ENCODE measurements at regions of chr7 and their contacts with region 1.

Region 1: GRCh38 chr7:131107337-131108211 is 220.1 kb upstream of the MKLN1 start:
- DNase-seq: peak; percentile 68 to 85
- ATAC-seq: peak; percentile 46 to 64 (median 52)
- H3K4me3 ChIP-seq: peak overlapping the region; percentile 98
- H3K27ac ChIP-seq: peak overlapping the region; percentile 96
- H3K4me1 ChIP-seq: peaks cover 45% of the 10 kb centered on the region
- H3K27me3 ChIP-seq: no peaks in the 10 kb centered on the region
- CTCF ChIP-seq: no peak

Region 2: GRCh38 chr7:130896898-130897514 is 210.6 kb before region 1 on chr7:
- intact Hi-C with region 1: loop called in 1 of 2 experiments (anchors 5 kb)
- DNase-seq: peak; percentile 81 to 89
- ATAC-seq: peak; percentile 31 to 58 (median 44)
- H3K4me3 ChIP-seq: peak overlapping the region; percentile 0
- H3K27ac ChIP-seq: peak overlapping the region; percentile 94
- H3K4me1 ChIP-seq: peaks cover 89% of the 10 kb centered on the region
- H3K27me3 ChIP-seq: no peaks in the 10 kb centered on the region
- CTCF ChIP-seq: peak; percentile 77

Region 3: GRCh38 chr7:131145026-131145425 is 37.5 kb after region 1 on chr7:
- intact Hi-C with region 1: loop called (anchors 5 kb)
- DNase-seq: no peak
- ATAC-seq: no peak
- H3K4me3 ChIP-seq: no peak overlapping the region
- H3K27ac ChIP-seq: no peak overlapping the region
- H3K4me1 ChIP-seq: peaks cover 22% of the 10 kb centered on the region
- H3K27me3 ChIP-seq: no peaks in the 10 kb centered on the region
- CTCF ChIP-seq: no peak

Region 4: GRCh38 chr7:131188367-131189339 is 81.1 kb after region 1 on chr7:
- intact Hi-C with region 1: loop called (anchors 1 to 5 kb)
- DNase-seq: peak in 1 of 2 donors; percentile 56
- ATAC-seq: peak; percentile 12 to 79 (median 50)
- H3K4me3 ChIP-seq: no peak overlapping the region
- H3K27ac ChIP-seq: peak overlapping the region; percentile 86
- H3K4me1 ChIP-seq: peaks cover 41% of the 10 kb centered on the region
- H3K27me3 ChIP-seq: no peaks in the 10 kb centered on the region
- CTCF ChIP-seq: no peak

Region 5: DNA sequence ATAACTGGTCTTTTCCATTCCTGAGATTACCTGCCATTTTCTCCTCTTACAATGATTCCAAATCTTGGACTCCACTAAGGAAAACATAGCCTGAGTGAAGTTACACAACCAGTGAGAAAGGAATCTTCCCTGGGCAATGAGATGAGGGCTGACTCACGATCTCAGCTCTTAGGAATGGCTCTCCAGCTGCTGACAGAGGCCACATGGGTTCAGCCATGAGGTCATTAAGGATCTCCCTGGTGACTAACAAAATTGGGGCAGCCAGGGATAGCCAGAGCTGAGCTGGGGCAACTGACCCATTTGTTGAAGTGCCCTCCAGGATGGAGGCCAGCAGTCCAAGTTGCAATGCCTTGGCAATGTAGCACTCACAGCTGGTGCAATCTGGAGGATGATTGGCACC is 141.4 kb after region 1 on chr7:
- intact Hi-C with region 1: loop called (anchors 1 to 5 kb)
- DNase-seq: peak; percentile 81 to 91
- ATAC-seq: peak; percentile 99 to 100 (median 100)
- H3K4me3 ChIP-seq: no peak overlapping the region
- H3K27ac ChIP-seq: peak overlapping the region; percentile 71
- H3K4me1 ChIP-seq: peaks cover 14% of the 10 kb centered on the region
- H3K27me3 ChIP-seq: no peaks in the 10 kb centered on the region
- CTCF ChIP-seq: no peak

Region 6: DNA sequence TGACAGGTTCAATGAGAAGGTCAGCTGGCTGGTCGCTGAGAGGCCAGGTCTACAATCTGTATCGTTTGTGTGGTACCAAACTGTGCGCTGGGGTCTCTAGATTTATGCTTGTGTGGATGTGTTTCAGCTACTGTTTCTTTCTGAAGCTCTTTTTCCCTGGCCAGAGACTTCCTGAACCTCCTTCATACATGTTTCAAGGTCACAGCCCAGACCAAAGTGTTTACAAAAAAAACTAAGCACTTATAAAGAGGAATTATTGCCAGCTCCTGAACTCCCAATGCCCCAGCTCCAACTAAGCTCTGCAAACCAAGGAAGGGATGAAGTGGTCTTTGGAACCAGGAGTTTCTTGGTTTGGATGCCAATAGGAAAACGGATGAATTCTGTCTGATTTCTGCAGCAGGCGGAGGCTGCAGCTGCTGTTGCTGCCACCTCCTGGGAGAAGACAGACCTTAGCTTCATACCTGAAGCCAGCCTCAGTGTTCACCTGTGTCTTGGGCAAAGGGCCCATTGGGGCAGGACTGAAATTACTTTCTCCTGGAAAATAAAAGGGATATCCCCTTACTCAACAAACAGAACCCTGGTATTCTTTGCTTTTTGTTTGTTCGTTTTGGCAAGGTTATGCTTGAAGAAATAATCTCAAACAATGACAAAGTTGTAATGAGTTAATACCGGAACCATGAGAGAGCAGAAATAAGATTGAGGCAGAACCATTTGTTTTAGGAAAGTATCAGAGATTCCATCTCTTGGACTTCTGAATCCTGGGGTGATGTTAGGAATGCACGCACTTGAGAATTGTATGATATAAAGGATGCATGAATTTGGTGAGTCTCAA is 195.5 kb after region 1 on chr7:
- intact Hi-C with region 1: loop called in 1 of 2 experiments (anchors 10 kb)
- DNase-seq: no peak
- ATAC-seq: peak; percentile 41 to 64 (median 54)
- H3K4me3 ChIP-seq: no peak overlapping the region
- H3K27ac ChIP-seq: no peak overlapping the region
- H3K4me1 ChIP-seq: peaks cover 24% of the 10 kb centered on the region
- H3K27me3 ChIP-seq: no peaks in the 10 kb centered on the region
- CTCF ChIP-seq: peak; percentile 57

Region 7: GRCh38 chr7:131327626-131328376 is 220.2 kb after region 1 on chr7 and contains the start of gene MKLN1:
- intact Hi-C with region 1: loop called in 1 of 2 experiments (anchors 2 kb)
- DNase-seq: peak; percentile 94 to 96
- ATAC-seq: peak; percentile 98 to 99 (median 98)
- H3K4me3 ChIP-seq: peak within 1 kb of the TSS; percentile 99
- H3K27ac ChIP-seq: peak within 1 kb of the TSS; percentile 99
- H3K4me1 ChIP-seq: peaks cover 33% of the 10 kb centered on the region
- H3K27me3 ChIP-seq: no peaks in the 10 kb centered on the region
- CTCF ChIP-seq: no peak
- total RNA-seq, gene MKLN1: 34.9 to 49.3 (median 45.3) TPM